ENCODE measurements at regions of chr2 and their contacts with region 1.

Region 1: GRCh38 chr2:112645310-112646101 is at the start of gene SLC20A1:
- DNase-seq: peak; percentile 97
- H3K4me3 ChIP-seq: peak within 1 kb of the TSS; percentile 87 to 99 (median 94)
- H3K27ac ChIP-seq: peak within 1 kb of the TSS; percentile 98 to 100 (median 99)
- H3K4me1 ChIP-seq: peaks cover 0 to 42% (median 32%) of the 10 kb centered on the region in 4 donors
- H3K27me3 ChIP-seq: no peaks in the 10 kb centered on the region
- CTCF ChIP-seq: peak in 1 of 4 experiments; percentile 15
- EP300 ChIP-seq: peak in 1 of 4 donors; percentile 26
- POLR2A ChIP-seq: peak; percentile 93 to 96
- total RNA-seq, gene SLC20A1: 11.4 to 25.1 (median 14.3) TPM

Region 2: DNA sequence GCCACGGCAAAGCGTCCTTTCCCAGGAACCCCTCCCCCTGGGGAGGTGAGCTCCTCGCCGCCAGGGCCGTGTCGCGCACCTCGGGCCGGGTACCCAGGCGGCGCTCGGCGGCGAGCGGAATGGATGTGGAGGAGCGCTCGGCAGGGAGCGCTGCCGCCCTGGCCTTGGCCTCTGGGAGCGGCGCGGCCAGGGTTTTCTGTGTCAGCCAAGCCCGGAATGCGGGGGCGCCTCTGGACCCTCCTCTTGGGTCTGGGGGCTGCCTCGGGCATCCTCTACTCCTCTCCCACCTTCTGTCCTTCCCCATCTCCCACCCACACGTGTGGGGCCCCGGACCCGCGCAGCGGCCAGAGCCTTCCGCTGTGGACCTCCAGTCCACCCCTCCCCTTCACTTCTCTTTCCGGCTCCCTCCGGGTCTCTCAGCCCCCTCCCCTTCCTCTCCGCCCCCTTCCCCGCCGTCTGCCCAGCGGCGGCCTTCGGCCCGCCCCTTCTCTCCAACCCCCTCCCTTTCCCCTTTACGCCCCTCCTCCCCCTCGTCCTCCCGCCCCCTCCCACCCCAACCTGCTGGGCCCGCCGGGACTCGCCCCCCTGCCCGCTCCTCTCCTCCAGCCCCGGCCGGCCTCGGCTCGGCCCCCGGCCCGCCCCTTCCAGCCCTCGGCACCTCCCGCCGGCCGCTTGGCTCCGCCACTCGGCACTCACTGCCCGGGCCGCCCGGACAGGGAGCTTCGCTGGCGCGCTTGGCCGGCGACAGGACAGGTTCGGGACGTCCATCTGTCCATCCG is 747.4 kb before region 1 on chr2 and contains the start of gene MERTK:
- intact Hi-C with region 1: loop called (anchors 5 kb)
- DNase-seq: peak; percentile 95
- H3K4me3 ChIP-seq: peak within 1 kb of the TSS; percentile 70 to 80 (median 75)
- H3K27ac ChIP-seq: peak within 1 kb of the TSS; percentile 80 to 90 (median 88)
- H3K4me1 ChIP-seq: peaks cover 0 to 37% (median 23%) of the 10 kb centered on the region in 4 donors
- H3K27me3 ChIP-seq: no peaks in the 10 kb centered on the region
- CTCF ChIP-seq: peak; percentile 43 to 49 (median 46)
- EP300 ChIP-seq: no peak
- POLR2A ChIP-seq: peak in 1 of 2 donors; percentile 42
- total RNA-seq, gene MERTK: 14.4 to 31.6 (median 26.0) TPM

Region 3: GRCh38 chr2:112254466-112255239 is 390.9 kb before region 1 on chr2 and contains the start of gene ZC3H8:
- intact Hi-C with region 1: loop called (anchors 5 kb)
- DNase-seq: peak; percentile 96
- H3K4me3 ChIP-seq: peak within 1 kb of the TSS; percentile 57 to 81 (median 66)
- H3K27ac ChIP-seq: peak within 1 kb of the TSS; percentile 80 to 85 (median 81)
- H3K4me1 ChIP-seq: peaks cover 0 to 15% (median 11%) of the 10 kb centered on the region in 4 donors
- H3K27me3 ChIP-seq: no peaks in the 10 kb centered on the region
- CTCF ChIP-seq: no peak
- EP300 ChIP-seq: no peak
- POLR2A ChIP-seq: peak; percentile 59 to 60
- total RNA-seq, gene ZC3H8: 2.7 to 22.2 (median 7.4) TPM

Region 4: GRCh38 chr2:112275306-112275886 is 370.1 kb before region 1 on chr2 and contains the start of gene ZC3H6:
- intact Hi-C with region 1: loop called (anchors 5 kb)
- DNase-seq: peak; percentile 99
- H3K4me3 ChIP-seq: peak within 1 kb of the TSS; percentile 68 to 97 (median 89)
- H3K27ac ChIP-seq: peak within 1 kb of the TSS; percentile 95 to 100 (median 99)
- H3K4me1 ChIP-seq: peaks cover 0 to 14% (median 6%) of the 10 kb centered on the region in 4 donors
- H3K27me3 ChIP-seq: no peaks in the 10 kb centered on the region
- CTCF ChIP-seq: peak in 1 of 4 experiments; percentile 36
- EP300 ChIP-seq: peak in 1 of 4 donors; percentile 13
- POLR2A ChIP-seq: peak; percentile 91 to 94
- total RNA-seq, gene ZC3H6: 13.2 to 27.1 (median 16.5) TPM

Region 5: GRCh38 chr2:112584134-112584890 is 61.2 kb before region 1 on chr2 and contains the start of gene CHCHD5:
- intact Hi-C with region 1: loop called (anchors 1 kb)
- DNase-seq: peak; percentile 98
- H3K4me3 ChIP-seq: peak within 1 kb of the TSS; percentile 62 to 69 (median 66)
- H3K27ac ChIP-seq: peak within 1 kb of the TSS; percentile 85 to 94 (median 93)
- H3K4me1 ChIP-seq: peaks cover 0 to 25% (median 18%) of the 10 kb centered on the region in 4 donors
- H3K27me3 ChIP-seq: no peaks in the 10 kb centered on the region
- CTCF ChIP-seq: peak in 2 of 4 experiments; percentile 17 to 27
- EP300 ChIP-seq: peak in 2 of 4 donors; percentile 15 to 16
- POLR2A ChIP-seq: peak; percentile 18 to 36
- total RNA-seq, gene CHCHD5: 13.8 to 36.4 (median 25.3) TPM

Region 6: DNA sequence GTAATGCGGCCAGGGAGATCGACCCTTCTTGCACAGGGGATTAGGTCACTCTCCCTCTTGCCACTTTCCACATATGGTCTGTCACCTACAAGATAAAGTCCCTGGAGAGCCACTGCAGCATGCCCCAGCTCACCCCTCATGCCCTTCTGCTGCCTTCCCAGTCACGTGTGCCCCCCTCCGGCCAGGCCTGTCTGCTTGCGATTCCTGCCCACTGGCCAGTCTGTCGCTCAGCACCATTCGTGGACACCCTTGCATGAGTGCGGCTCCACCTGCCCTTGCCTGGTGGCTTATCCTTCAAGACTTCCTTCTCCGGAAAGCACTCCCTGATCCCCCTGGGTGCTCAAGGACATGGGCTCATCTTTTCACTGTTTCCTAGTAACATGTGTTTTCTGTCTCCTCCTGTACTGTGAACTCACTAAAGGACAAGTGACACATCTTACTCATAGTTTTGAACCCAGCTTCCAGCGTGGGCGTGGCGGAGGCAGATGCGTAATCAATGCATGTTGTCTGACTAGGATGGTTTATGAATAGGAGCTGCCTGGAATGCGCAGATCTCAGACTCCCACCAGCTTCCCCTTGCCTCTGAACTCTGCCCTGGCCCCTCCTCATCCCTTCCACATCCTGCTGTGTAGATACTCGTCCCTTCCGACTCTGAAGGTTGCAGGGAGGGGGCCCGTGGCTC is 67.5 kb after region 1 on chr2:
- intact Hi-C with region 1: no loop called
- DNase-seq: no peak
- H3K4me3 ChIP-seq: no peak overlapping the region
- H3K27ac ChIP-seq: no peak overlapping the region
- H3K4me1 ChIP-seq: no peaks in the 10 kb centered on the region
- H3K27me3 ChIP-seq: peaks cover 0 to 5% (median 0%) of the 10 kb centered on the region in 3 donors
- CTCF ChIP-seq: no peak
- EP300 ChIP-seq: no peak
- POLR2A ChIP-seq: no peak

Region 7: DNA sequence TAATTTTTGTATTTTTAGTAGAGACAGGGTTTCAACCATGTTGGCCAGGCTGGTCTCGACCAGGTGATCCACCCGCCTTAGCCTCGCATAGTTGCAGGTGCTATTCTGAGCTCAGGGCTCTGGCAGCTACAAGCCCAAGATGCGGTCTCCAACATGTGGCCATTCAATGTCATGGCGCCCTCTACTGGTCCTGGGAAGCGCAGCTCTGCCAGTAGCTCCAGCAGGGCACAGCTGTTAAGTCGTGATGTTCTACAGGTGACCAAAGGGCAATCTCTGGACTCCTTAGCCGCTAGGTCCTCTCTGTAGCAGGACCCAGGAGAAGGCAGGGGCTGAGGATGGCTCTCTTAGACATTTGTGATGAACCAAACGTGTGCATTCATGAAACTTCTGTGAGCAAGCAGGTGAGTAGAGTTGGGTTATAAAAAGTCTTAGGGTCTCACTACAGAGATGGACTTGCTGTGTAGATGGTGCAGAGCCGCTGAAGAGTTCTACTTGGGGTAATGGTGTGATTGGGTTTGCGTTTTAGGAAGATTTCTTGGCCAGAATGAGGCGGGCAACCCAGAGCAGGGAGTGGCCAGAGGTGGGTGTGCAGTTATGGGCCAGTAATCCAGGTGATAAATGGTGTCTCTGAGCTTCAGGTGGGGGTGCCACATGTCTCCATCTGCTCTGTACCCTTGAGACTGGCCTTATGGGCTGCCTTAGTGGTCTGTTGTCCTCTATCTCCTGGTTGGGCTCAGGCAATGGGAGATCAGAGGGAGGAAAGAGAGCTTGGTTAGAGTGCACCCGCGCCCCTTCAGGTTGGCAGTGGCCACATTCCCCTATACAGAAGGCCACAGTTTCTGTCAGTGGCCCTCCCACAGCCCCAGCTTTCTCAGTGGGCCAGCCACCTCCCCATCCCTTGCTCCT is 296.5 kb after region 1 on chr2:
- intact Hi-C with region 1: no loop called
- DNase-seq: peak; percentile 78
- H3K4me3 ChIP-seq: no peak overlapping the region
- H3K27ac ChIP-seq: no peak overlapping the region
- H3K4me1 ChIP-seq: peaks cover 0 to 20% (median 11%) of the 10 kb centered on the region in 4 donors
- H3K27me3 ChIP-seq: no peaks in the 10 kb centered on the region
- CTCF ChIP-seq: peak; percentile 41 to 61 (median 50)
- EP300 ChIP-seq: no peak
- POLR2A ChIP-seq: no peak

Measured in sigmoid colon (tissue), 7 donors.